Activated CD8-positive, alpha-beta T cell treated with anti-CD3 and anti-CD28 coated beads for 36 hours (primary cell): ENCODE measurements at regions of chr11 and their contacts with region 1.

Region 1: DNA sequence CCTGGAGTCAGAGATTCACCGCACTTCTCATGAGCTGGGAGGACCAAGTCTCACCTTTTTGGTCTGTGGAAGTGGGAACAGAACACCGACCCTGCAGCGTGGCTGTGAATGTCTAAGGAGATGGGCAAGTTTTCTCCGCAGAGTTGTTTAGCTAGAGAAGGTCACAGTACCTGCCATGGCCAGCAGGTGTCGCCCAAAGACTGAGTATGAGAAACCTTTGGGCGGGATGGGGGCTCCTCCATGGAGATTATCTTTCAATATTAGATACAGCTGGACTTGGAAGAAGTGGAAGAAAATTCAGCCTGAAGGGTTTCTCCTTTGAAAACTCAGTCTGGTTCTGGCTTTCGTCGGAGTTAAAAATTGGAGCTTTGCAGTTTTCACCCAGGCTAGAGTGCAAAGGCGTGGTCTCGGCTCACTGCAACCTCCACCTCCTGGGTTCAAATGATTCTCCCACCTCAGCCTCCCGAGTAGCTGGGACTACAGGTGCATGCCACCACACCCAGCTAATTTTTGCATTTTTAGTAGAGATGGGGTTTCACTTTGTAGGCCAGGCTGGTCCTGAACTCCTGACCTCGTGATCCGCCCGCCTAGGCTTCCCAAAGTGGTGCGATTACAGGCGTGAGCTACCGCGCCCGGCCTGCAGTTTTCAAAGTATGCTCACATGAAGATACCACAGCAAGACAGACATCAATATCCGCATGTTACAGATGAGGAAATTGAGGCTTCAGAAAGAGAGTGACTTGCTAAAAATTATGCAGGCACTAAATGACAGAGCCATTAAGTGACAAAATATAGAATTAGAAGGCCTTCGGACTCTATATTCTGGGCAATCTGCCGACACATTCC is 10.7 kb upstream of the DSCAML1 start:
- DNase-seq: peak; percentile 91
- ATAC-seq: peak; percentile 74
- H3K4me3 Mint-ChIP-seq: no peak overlapping the region
- H3K27ac Mint-ChIP-seq: no peak overlapping the region
- H3K4me1 Mint-ChIP-seq: peaks cover 16% of the 10 kb centered on the region
- H3K27me3 Mint-ChIP-seq: no peaks in the 10 kb centered on the region
- CTCF ChIP-seq: peak; percentile 99

Region 2: GRCh38 chr11:117435326-117435725 is 372.4 kb before region 1 on chr11:
- CTCF ChIA-PET with region 1: no interaction called
- POLR2A ChIA-PET with region 1: no interaction called
- intact Hi-C with region 1: no loop called
- DNase-seq: no peak
- ATAC-seq: peak; percentile 34
- H3K4me3 Mint-ChIP-seq: no peak overlapping the region
- H3K27ac Mint-ChIP-seq: no peak overlapping the region
- H3K4me1 Mint-ChIP-seq: no peaks in the 10 kb centered on the region
- H3K27me3 Mint-ChIP-seq: peaks cover 4% of the 10 kb centered on the region
- CTCF ChIP-seq: no peak

Region 3: GRCh38 chr11:117796872-117797529 is 10.7 kb before region 1 on chr11 and contains the start of gene DSCAML1:
- CTCF ChIA-PET with region 1: interaction called, 33 read pairs
- POLR2A ChIA-PET with region 1: interaction called, 4 read pairs
- intact Hi-C with region 1: no loop called
- DNase-seq: peak; percentile 44
- ATAC-seq: peak; percentile 89
- H3K4me3 Mint-ChIP-seq: peak within 1 kb of the TSS; percentile 46
- H3K27ac Mint-ChIP-seq: no peak within 1 kb of the TSS
- H3K4me1 Mint-ChIP-seq: peaks cover 13% of the 10 kb centered on the region
- H3K27me3 Mint-ChIP-seq: peaks cover 35% of the 10 kb centered on the region
- CTCF ChIP-seq: no peak
- total RNA-seq, gene DSCAML1: 0.13 to 0.29 TPM

Region 4: DNA sequence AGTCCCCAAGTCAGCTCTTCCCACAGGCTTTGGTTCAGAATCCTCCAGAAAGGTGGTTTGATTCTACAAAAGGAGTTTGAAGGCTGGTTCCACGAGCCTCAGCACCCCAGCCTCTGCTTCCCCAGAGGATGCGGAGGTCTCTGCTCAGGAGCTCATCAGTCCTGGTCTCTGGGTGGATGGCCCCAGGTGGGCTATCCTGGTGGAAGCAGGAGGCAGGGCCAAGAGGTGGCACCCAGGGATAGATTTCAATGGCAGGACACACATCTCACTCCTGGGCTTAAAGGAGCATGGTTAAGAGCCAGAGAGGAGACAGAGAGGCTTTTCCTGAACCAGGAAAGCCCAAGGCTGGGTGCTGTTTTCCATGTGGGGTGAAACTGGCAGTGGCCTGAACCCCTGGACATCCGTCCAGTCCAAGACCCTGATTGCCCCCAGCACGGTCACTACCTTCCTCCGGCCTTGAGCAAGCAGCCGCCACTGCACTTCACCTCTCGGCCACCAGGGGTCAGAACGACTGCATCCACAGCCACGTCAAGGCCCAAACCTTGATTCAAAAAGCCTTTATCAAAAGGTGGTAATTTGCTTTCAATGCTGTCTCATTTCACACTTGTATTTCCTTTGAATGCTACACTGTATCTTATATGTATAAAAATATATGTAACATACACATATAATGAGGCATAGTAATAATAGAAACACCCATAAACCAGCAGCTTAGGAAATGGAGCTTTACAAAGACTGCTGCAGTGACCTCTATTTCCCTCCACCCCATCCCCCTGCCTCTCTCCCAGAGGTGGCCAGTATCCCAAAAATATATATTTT is 36.2 kb after region 1 on chr11:
- CTCF ChIA-PET with region 1: interaction called, 32 read pairs
- POLR2A ChIA-PET with region 1: no interaction called
- intact Hi-C with region 1: no loop called
- DNase-seq: peak; percentile 92
- ATAC-seq: peak; percentile 96
- H3K4me3 Mint-ChIP-seq: no peak overlapping the region
- H3K27ac Mint-ChIP-seq: no peak overlapping the region
- H3K4me1 Mint-ChIP-seq: peaks cover 4% of the 10 kb centered on the region
- H3K27me3 Mint-ChIP-seq: no peaks in the 10 kb centered on the region
- CTCF ChIP-seq: peak; percentile 96

Region 5: DNA sequence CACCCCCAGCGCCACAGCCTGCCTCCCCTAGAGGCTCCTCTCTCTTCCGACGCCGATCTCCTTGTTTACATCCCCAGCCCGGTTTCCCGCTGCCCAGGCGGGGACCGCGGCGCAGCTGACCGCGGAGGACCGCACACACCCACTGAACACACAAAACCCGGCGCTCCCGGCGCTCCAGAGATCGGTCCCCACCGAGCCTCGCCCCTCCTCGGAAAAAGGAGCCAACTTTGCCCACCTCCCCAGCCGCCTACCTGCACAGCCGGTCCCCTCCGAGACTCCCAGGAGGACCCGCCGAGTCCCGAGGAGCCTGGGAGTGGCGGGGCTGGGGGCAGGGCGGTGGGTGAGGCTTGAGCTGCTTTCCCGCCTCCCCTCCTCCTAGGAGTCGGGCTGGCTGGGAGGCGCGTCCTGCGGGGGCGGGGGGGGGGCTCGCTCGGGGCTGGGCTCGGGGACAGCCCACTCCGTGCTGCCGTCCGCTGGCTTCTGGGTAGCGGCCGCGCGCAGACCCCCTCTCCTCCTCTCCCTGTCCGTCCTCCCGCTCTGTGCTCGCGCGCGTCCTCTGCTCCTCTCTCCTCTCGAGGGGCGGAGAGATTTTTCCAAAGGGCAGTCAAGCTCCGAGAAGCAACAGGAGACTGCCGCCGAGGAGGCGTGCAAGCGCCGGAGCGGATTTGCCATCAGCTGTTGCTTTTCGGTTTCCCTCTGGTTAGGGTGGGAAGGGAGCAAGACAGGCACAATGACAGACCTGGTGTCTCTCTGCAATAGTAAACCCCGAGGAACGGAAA is 68.8 kb after region 1 on chr11 and contains the start of gene FXYD6:
- CTCF ChIA-PET with region 1: interaction called, 15 read pairs
- POLR2A ChIA-PET with region 1: interaction called, 3 read pairs
- intact Hi-C with region 1: no loop called
- DNase-seq: no peak
- ATAC-seq: peak; percentile 25
- H3K4me3 Mint-ChIP-seq: peak within 1 kb of the TSS; percentile 71
- H3K27ac Mint-ChIP-seq: peak within 1 kb of the TSS; percentile 32
- H3K4me1 Mint-ChIP-seq: peaks cover 20% of the 10 kb centered on the region
- H3K27me3 Mint-ChIP-seq: peaks cover 50% of the 10 kb centered on the region
- CTCF ChIP-seq: no peak
- total RNA-seq, gene FXYD6: not detected